ENCODE measurements at regions of chr16 and their contacts with region 1.

Region 1: GRCh38 chr16:58755989-58756649 is 22.0 kb upstream of the GOT2 start:
- DNase-seq: peak; percentile 52
- H3K4me3 Mint-ChIP-seq: no peak overlapping the region
- H3K27ac Mint-ChIP-seq: no peak overlapping the region
- H3K4me1 Mint-ChIP-seq: no peaks in the 10 kb centered on the region
- H3K27me3 Mint-ChIP-seq: peaks cover 31% of the 10 kb centered on the region
- CTCF ChIP-seq: peak; percentile 30

Region 2: DNA sequence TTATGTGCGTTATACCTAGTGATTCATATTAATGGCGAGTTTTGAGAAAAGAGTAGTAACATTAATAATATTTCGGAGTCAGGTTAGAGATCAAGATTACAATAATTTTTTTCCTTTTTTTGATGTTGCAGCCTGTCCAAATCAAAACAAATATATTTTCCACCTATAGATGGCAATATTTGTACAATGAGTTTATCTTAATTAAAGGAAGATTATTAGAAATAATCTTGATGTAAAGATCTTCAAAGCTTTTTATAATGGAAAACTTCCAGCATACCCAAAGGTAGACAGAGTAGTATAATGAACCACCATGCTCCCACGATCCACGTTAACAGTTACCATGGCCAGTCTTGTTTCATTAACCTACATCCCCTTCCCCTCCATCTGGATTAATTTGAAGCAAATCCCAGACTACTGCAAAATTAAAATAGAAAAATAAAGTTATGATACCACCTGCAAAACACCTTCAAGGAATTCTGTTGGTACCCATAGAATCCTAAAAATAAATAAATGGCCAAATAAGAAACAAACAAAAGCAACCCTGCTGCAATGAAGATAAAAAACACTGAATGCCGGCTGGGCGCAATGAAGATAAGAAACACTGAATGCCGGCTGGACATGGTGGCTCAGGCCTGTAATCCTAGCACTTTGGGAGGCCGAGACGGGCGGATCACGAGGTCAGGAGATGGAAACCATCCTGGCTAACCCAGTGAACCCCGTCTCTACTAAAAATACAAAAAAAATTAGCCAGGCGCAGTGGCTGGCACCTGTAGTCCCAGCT is 410.4 kb before region 1 on chr16:
- CTCF ChIA-PET with region 1: no interaction called
- intact Hi-C with region 1: loop called (anchors 10 kb)
- DNase-seq: no peak
- H3K4me3 Mint-ChIP-seq: no peak overlapping the region
- H3K27ac Mint-ChIP-seq: no peak overlapping the region
- H3K4me1 Mint-ChIP-seq: no peaks in the 10 kb centered on the region
- H3K27me3 Mint-ChIP-seq: peaks cover 74% of the 10 kb centered on the region
- CTCF ChIP-seq: peak; percentile 14

Region 3: GRCh38 chr16:58652461-58653140 is 103.5 kb before region 1 on chr16:
- CTCF ChIA-PET with region 1: no interaction called
- intact Hi-C with region 1: no loop called
- DNase-seq: no peak
- H3K4me3 Mint-ChIP-seq: no peak overlapping the region
- H3K27ac Mint-ChIP-seq: no peak overlapping the region
- H3K4me1 Mint-ChIP-seq: no peaks in the 10 kb centered on the region
- H3K27me3 Mint-ChIP-seq: peaks cover 18% of the 10 kb centered on the region
- CTCF ChIP-seq: no peak

Region 4: GRCh38 chr16:58678716-58679115 is 77.4 kb before region 1 on chr16:
- CTCF ChIA-PET with region 1: interaction called, 17 read pairs
- intact Hi-C with region 1: loop called (anchors 2 kb)
- DNase-seq: peak; percentile 30
- H3K4me3 Mint-ChIP-seq: no peak overlapping the region
- H3K27ac Mint-ChIP-seq: no peak overlapping the region
- H3K4me1 Mint-ChIP-seq: peaks cover 5% of the 10 kb centered on the region
- H3K27me3 Mint-ChIP-seq: no peaks in the 10 kb centered on the region
- CTCF ChIP-seq: no peak